Posterior cingulate gyrus (tissue), 11 donors: ENCODE measurements at regions of chr2 and their contacts with region 1.

Region 1: DNA sequence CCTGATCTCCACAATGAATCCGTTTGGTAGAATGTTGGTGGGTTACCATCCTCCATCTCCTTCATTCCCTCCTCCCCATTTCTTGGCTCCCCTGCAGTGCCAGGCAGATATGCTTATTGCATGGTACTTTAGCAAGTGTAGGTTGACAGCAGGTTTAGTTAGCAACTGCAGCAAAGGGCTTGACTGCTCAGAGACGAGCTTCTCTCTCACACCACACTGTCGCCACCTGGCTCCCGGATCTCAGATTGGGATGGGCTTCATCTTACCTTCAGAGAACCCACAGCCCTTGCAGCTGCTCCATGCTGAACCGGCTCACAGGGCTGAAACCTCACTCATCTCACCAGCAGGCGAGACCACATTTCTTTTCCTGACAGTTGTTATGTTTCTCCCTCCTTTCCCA is 88.8 kb downstream of the VWA3B start:
- DNase-seq: peak in 2 of 10 donors; percentile 34 to 70

Region 2: DNA sequence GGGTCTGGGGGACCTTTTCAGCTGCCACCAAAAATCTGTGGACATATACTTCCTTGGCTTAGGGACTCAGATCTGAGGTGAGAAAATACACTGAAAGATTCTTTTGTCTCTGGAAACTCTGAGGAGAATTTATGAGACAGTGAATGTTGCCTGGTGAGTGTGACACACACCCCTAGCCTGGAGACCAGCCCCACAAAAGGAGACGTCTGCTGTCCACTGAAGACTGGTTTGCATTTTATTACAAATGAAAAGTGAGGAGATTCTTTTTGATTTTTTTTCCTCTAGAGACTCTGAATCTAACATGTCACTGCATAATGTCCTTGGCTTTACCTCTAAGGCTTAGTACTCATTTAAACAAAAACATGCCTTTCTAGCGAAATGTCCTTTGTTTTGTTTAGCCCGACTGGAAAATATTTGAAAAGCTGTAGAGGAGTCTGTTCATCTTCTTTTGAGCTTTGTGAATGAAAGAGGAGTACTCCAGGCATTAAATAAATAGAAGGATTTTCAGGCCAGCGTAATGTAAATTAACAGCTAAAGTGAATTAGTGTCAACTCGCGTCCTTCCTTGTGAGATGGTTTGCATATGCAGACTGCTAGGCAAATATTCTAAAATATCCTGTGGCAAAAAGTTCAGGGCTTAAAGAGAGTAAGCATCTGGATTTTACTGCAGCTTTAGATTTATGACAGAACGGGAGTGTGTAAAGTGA is 36.4 kb after region 1 on chr2:
- intact Hi-C with region 1: no loop called
- DNase-seq: no peak

Region 3: GRCh38 chr2:98378930-98379671 is 203.3 kb after region 1 on chr2:
- intact Hi-C with region 1: loop called (anchors 10 kb)
- DNase-seq: no peak